ENCODE measurements at regions of chr10 and their contacts with region 1.

Region 1: DNA sequence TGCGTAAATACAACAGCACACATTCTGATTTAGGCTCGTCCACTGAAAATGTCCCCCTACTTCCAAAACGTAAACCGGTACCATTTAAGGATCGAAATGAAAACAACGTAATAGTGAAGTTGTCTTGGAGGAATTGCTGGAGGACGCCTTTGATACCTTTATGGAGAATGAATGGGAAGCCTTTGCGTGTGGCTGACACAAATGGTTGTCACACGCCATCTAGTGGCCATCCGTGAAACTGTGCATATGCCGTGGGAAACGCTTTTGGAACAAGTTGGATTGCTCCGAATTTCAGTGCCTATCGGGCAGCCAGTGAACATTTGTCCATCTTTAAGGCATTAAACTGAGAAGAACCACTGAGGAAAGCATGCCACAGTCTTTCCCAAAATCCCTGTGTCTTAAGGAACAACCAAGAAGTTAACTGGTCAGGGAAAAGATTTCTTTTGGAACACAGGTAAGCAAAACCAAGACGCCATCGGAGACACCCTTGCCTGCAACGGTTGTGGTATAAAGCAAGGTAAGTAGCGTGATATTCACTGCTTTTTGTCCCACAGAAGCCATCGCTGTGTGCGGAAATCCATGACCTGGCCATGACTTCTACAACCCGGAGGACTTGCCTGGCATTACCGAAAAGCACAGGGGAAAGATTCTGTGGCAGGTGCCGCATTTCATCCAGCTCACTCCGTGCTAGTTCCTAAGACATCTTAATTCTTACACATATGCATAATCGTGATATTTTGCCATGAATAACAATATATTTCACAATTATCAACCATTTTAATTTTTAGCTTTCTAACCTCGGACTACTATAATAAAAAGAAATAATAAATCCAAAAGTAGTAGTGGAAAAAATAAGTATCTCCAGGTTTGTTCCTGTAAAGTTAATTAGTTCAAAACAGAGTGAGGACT is 100.6 kb downstream of the FAM204A start:
- DNase-seq: peak; percentile 77 to 81
- H3K4me3 ChIP-seq: no peak overlapping the region
- H3K4me3 Mint-ChIP-seq: no peak overlapping the region
- H3K27ac Mint-ChIP-seq: no peak overlapping the region
- H3K4me1 ChIP-seq: no peaks in the 10 kb centered on the region
- H3K4me1 Mint-ChIP-seq: no peaks in the 10 kb centered on the region
- H3K27me3 ChIP-seq: peaks cover 2% of the 10 kb centered on the region; the same call in 1 of the 2 replicates
- H3K27me3 Mint-ChIP-seq: peaks cover 3% of the 10 kb centered on the region
- CTCF ChIP-seq: peak; percentile 79 to 92

Region 2: GRCh38 chr10:117216611-117217195 is 1024.8 kb before region 1 on chr10:
- CTCF ChIA-PET with region 1: no interaction called
- POLR2A ChIA-PET with region 1: no interaction called
- intact Hi-C with region 1: loop called (anchors 5 kb)
- DNase-seq: peak; percentile 77 to 90
- H3K4me3 ChIP-seq: peak overlapping the region; percentile 59
- H3K4me3 Mint-ChIP-seq: peak overlapping the region; percentile 90
- H3K27ac Mint-ChIP-seq: no peak overlapping the region
- H3K4me1 ChIP-seq: 0 out of 2 replicates have a peak, but pooled peaks cover 5% of the 10 kb centered on the region
- H3K4me1 Mint-ChIP-seq: no peaks in the 10 kb centered on the region
- H3K27me3 ChIP-seq: no peaks in the 10 kb centered on the region; the same call in 1 of the 2 replicates
- H3K27me3 Mint-ChIP-seq: peaks cover 13% of the 10 kb centered on the region
- CTCF ChIP-seq: peak; percentile 100

Region 3: DNA sequence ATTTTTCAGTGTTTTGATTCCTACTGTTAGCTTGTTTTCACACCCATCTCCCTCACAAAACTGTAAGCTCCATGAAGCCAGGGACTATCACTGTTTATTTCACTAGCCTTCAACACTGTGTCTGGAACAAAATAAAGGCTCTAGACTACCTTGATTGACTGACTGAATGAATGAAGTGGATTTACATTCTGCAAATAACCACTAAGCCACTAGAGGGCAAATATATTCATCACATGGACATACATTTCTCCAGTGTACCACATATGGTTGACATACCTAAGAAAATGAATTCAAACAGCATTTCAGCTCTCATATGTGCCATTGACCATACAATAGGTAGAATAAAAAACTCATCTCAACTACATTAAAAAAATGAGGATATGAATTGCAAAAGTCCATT is 380.7 kb before region 1 on chr10:
- CTCF ChIA-PET with region 1: no interaction called
- POLR2A ChIA-PET with region 1: no interaction called
- intact Hi-C with region 1: loop called (anchors 1 kb)
- DNase-seq: peak in 1 of 2 experiments; percentile 17
- H3K4me3 ChIP-seq: no peak overlapping the region
- H3K4me3 Mint-ChIP-seq: no peak overlapping the region
- H3K27ac Mint-ChIP-seq: no peak overlapping the region
- H3K4me1 ChIP-seq: no peaks in the 10 kb centered on the region
- H3K4me1 Mint-ChIP-seq: no peaks in the 10 kb centered on the region
- H3K27me3 ChIP-seq: no peaks in the 10 kb centered on the region
- H3K27me3 Mint-ChIP-seq: peaks cover 12% of the 10 kb centered on the region
- CTCF ChIP-seq: peak; percentile 53 to 62

Region 4: GRCh38 chr10:118035354-118036005 is 206.0 kb before region 1 on chr10:
- CTCF ChIA-PET with region 1: no interaction called
- POLR2A ChIA-PET with region 1: no interaction called
- intact Hi-C with region 1: loop called (anchors 5 kb)
- DNase-seq: no peak
- H3K4me3 ChIP-seq: no peak overlapping the region
- H3K4me3 Mint-ChIP-seq: no peak overlapping the region
- H3K27ac Mint-ChIP-seq: no peak overlapping the region
- H3K4me1 ChIP-seq: peaks cover 7% of the 10 kb centered on the region; the same call in 1 of the 2 replicates
- H3K4me1 Mint-ChIP-seq: peaks cover 6% of the 10 kb centered on the region
- H3K27me3 ChIP-seq: no peaks in the 10 kb centered on the region
- H3K27me3 Mint-ChIP-seq: no peaks in the 10 kb centered on the region
- CTCF ChIP-seq: no peak

Region 5: DNA sequence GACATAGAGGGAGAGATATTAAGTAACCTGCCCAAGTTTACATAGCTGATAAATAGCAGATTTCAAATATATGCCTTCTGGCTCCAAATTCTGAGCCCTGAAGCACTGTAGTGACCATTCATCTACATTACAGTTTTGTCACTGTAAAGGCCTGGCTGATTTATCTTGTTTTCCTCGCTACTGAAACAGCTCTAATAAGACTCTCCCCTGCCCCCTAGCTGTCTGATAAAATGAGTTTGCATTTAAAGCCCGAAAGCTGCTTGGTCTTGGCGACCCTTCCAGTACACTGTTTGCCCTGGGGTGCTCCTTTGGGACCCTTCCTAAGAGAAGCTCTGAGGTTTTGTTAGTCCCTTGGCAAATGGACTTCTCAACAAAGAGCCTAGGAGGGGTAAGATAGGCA is 135.1 kb before region 1 on chr10:
- CTCF ChIA-PET with region 1: interaction called, 4 read pairs
- POLR2A ChIA-PET with region 1: no interaction called
- intact Hi-C with region 1: loop called (anchors 1 kb)
- DNase-seq: peak; percentile 32 to 60
- H3K4me3 ChIP-seq: no peak overlapping the region
- H3K4me3 Mint-ChIP-seq: no peak overlapping the region
- H3K27ac Mint-ChIP-seq: no peak overlapping the region
- H3K4me1 ChIP-seq: no peaks in the 10 kb centered on the region
- H3K4me1 Mint-ChIP-seq: no peaks in the 10 kb centered on the region
- H3K27me3 ChIP-seq: no peaks in the 10 kb centered on the region
- H3K27me3 Mint-ChIP-seq: no peaks in the 10 kb centered on the region
- CTCF ChIP-seq: peak; percentile 56 to 65

Region 6: DNA sequence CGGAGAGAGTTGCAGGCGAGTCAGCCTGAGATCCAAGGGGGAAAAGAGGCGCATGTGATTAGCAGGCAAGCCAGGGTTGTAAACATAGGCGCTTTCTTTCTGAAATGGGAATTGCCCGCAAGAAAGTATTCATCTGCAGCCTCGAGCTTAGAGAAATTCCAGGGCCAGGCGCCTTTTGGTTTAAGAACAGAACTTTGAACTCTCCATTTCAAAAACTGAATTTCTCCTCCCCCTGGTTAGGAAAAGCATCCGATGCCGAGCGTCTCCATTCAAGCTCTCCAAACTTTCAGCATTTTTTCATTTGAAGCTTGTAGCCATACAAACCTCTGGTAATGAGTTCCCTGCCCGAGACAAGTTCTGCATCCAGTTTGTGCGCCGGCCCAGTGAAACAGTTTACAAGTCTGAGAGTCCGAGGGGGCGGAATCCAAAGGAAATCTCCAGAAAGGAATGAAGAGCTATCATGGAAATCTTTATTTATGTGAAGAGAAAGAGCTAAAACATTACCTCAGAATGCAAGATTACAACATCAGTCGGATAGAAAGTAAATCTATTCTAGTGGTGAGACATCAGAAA is 30.8 kb after region 1 on chr10:
- CTCF ChIA-PET with region 1: no interaction called
- POLR2A ChIA-PET with region 1: no interaction called
- intact Hi-C with region 1: no loop called
- DNase-seq: peak in 1 of 2 experiments; percentile 14
- H3K4me3 ChIP-seq: no peak overlapping the region
- H3K4me3 Mint-ChIP-seq: peak overlapping the region; percentile 59
- H3K27ac Mint-ChIP-seq: no peak overlapping the region
- H3K4me1 ChIP-seq: no peaks in the 10 kb centered on the region
- H3K4me1 Mint-ChIP-seq: no peaks in the 10 kb centered on the region
- H3K27me3 ChIP-seq: no peaks in the 10 kb centered on the region
- H3K27me3 Mint-ChIP-seq: peaks cover 3% of the 10 kb centered on the region
- CTCF ChIP-seq: no peak

Measured in Caco-2 (cell line).